ENCODE measurements at regions of chr6 and their contacts with region 1.

Region 1: GRCh38 chr6:2196079-2196679 is 49.2 kb downstream of the GMDS start:
- DNase-seq: peak; percentile 88
- H3K4me3 ChIP-seq: no peak overlapping the region
- H3K27ac ChIP-seq: no peak overlapping the region
- H3K4me1 ChIP-seq: peaks cover 11% of the 10 kb centered on the region
- H3K27me3 ChIP-seq: no peaks in the 10 kb centered on the region
- CTCF ChIP-seq: peak; percentile 50 to 53
- POLR2A ChIP-seq: no peak

Region 2: GRCh38 chr6:408599-409102 is 1787.5 kb before region 1 on chr6:
- CTCF ChIA-PET with region 1: no interaction called
- POLR2A ChIA-PET with region 1: no interaction called
- dilution Hi-C with region 1: no loop called
- intact Hi-C with region 1: no loop called
- DNase-seq: peak; percentile 26
- H3K4me3 ChIP-seq: no peak overlapping the region
- H3K27ac ChIP-seq: no peak overlapping the region
- H3K4me1 ChIP-seq: no peaks in the 10 kb centered on the region
- H3K27me3 ChIP-seq: peaks cover 3 to 4% of the 10 kb centered on the region in 2 experiments
- CTCF ChIP-seq: peak in 1 of 2 donors; percentile 1
- POLR2A ChIP-seq: no peak

Region 3: DNA sequence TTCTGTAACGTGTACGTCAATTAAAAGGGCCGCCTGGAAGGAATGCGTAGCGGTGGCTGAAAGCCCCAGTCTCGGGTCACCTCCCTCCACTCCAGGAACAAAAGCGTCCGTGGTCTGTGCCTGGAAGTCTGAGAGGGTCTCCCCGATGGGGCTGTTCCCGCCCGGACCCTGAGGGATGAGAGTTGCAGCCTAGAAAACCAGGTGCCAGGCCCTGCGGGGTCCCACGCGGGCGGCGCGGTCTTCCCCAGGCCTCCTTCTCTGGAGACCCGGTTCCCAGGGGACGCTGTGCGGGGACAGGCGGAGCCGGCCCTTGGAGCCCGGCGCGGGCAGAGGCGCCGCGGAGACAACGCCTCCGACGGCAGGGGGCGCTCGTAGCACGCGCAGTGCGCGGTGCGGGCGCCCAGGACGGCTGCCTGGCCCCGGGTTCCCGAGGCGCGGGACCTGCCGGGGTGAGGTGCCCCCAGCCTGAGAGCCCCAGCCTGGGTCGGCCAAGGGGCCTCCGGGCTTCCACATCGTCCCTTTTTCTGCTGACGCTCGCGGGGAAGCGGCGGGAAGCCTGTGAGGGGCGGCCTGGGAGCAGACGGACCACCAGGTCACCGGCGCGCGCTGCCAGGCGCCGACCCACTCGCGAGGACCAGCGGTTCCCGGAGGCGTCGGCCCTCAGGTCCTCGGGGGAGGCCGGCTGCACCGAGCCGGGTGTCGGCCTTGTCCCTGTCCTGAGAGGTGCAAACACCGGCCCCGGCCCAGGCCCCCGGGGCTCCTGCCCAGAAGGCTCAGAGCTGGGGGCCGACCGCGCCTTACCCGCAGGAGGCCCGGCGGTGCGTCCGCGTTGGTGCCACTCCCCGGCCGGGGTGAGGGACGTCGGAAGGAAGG is 591.8 kb before region 1 on chr6:
- CTCF ChIA-PET with region 1: interaction called, 4 read pairs
- POLR2A ChIA-PET with region 1: no interaction called
- dilution Hi-C with region 1: no loop called
- intact Hi-C with region 1: loop called (anchors 1 kb)
- DNase-seq: peak; percentile 63
- H3K4me3 ChIP-seq: peak overlapping the region; percentile 33 to 38 (median 36)
- H3K27ac ChIP-seq: no peak overlapping the region
- H3K4me1 ChIP-seq: peaks cover 3% of the 10 kb centered on the region
- H3K27me3 ChIP-seq: peaks cover 12 to 16% of the 10 kb centered on the region in 2 experiments
- CTCF ChIP-seq: peak; percentile 87 to 91
- POLR2A ChIP-seq: no peak

Region 4: DNA sequence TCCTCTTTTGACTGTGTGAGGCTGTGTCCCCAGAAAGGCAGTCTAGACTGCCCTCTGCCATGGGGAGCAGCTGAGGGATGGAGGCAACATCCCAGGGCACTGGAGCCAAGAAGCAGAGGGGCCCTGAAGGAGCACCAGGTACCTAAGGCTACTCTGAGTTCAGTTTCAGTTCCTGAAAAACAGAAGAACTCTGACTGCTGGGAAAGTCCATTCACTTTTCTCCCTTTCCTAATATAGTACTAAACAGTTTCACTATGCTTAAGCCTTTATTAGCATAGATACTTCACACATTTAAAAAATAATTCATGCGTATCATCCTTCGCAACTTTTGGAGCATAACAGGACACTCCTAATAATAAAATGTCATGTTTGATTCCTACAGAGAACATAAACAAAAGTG is 456.5 kb before region 1 on chr6:
- CTCF ChIA-PET with region 1: no interaction called
- POLR2A ChIA-PET with region 1: no interaction called
- dilution Hi-C with region 1: no loop called
- intact Hi-C with region 1: no loop called
- DNase-seq: no peak
- H3K4me3 ChIP-seq: no peak overlapping the region
- H3K27ac ChIP-seq: no peak overlapping the region
- H3K4me1 ChIP-seq: no peaks in the 10 kb centered on the region
- H3K27me3 ChIP-seq: no peaks in the 10 kb centered on the region
- CTCF ChIP-seq: no peak
- POLR2A ChIP-seq: no peak

Region 5: DNA sequence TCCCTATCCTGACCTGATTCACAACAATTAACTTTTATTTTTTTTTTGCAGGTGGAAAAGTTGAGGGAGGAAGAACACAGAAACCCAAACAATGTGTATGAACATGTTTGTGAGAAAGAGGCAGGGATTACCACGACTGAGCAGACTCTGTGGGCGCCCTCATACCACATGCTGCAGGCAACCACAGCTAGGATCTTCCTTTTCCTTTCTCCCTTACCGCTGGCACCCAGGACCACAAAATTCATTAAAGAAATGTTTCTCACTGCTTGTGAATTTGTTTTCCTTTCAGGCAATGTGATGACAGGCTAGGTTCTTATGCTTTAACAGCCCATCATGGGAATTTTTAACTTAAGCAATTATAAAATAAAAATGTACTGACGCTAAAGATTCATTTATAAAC is 237.9 kb before region 1 on chr6:
- CTCF ChIA-PET with region 1: no interaction called
- POLR2A ChIA-PET with region 1: no interaction called
- dilution Hi-C with region 1: no loop called
- intact Hi-C with region 1: no loop called
- DNase-seq: no peak
- H3K4me3 ChIP-seq: no peak overlapping the region
- H3K27ac ChIP-seq: no peak overlapping the region
- H3K4me1 ChIP-seq: no peaks in the 10 kb centered on the region
- H3K27me3 ChIP-seq: no peaks in the 10 kb centered on the region
- CTCF ChIP-seq: no peak
- POLR2A ChIP-seq: no peak

Region 6: GRCh38 chr6:2111162-2111677 is 85.0 kb before region 1 on chr6:
- CTCF ChIA-PET with region 1: interaction called, 4 read pairs
- POLR2A ChIA-PET with region 1: no interaction called
- dilution Hi-C with region 1: no loop called
- intact Hi-C with region 1: loop called (anchors 1 kb)
- DNase-seq: peak; percentile 97
- H3K4me3 ChIP-seq: peak overlapping the region in 1 of 3 experiments; percentile 51
- H3K27ac ChIP-seq: peak overlapping the region; percentile 76
- H3K4me1 ChIP-seq: peaks cover 40% of the 10 kb centered on the region
- H3K27me3 ChIP-seq: no peaks in the 10 kb centered on the region
- CTCF ChIP-seq: no peak
- POLR2A ChIP-seq: no peak

Region 7: DNA sequence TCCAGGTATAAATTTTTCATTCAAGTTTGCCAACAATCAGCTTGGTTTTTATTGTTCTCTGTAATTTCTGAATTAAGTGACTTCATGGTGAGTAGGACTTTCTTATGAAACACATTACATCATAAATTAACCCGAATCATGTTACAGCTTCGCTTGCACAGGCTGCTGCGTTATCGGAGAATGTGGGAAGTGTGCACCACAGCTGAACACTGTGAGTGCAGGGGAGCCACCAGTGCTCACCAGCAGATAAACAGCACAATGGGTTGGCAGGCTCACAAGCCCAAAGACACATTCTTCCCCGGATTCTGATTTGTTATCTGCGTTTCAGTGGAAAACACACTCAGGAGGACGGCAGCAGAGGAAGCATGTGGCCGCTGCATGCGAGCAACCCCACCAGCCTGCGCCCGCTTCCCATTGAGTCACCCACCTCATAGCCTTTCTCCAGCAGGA is 71.9 kb before region 1 on chr6:
- CTCF ChIA-PET with region 1: interaction called, 3 read pairs
- POLR2A ChIA-PET with region 1: no interaction called
- dilution Hi-C with region 1: no loop called
- intact Hi-C with region 1: loop called (anchors 1 kb)
- DNase-seq: peak; percentile 99
- H3K4me3 ChIP-seq: peak overlapping the region in 1 of 3 experiments; percentile 3
- H3K27ac ChIP-seq: peak overlapping the region; percentile 60
- H3K4me1 ChIP-seq: peaks cover 30% of the 10 kb centered on the region
- H3K27me3 ChIP-seq: no peaks in the 10 kb centered on the region
- CTCF ChIP-seq: no peak
- POLR2A ChIP-seq: peak; percentile 30

Region 8: GRCh38 chr6:2209226-2209809 is 13.1 kb after region 1 on chr6:
- CTCF ChIA-PET with region 1: interaction called, 21 read pairs
- POLR2A ChIA-PET with region 1: no interaction called
- dilution Hi-C with region 1: no loop called
- intact Hi-C with region 1: no loop called
- DNase-seq: peak; percentile 64
- H3K4me3 ChIP-seq: no peak overlapping the region
- H3K27ac ChIP-seq: no peak overlapping the region
- H3K4me1 ChIP-seq: no peaks in the 10 kb centered on the region
- H3K27me3 ChIP-seq: no peaks in the 10 kb centered on the region
- CTCF ChIP-seq: peak; percentile 42 to 75
- POLR2A ChIP-seq: no peak

Region 9: DNA sequence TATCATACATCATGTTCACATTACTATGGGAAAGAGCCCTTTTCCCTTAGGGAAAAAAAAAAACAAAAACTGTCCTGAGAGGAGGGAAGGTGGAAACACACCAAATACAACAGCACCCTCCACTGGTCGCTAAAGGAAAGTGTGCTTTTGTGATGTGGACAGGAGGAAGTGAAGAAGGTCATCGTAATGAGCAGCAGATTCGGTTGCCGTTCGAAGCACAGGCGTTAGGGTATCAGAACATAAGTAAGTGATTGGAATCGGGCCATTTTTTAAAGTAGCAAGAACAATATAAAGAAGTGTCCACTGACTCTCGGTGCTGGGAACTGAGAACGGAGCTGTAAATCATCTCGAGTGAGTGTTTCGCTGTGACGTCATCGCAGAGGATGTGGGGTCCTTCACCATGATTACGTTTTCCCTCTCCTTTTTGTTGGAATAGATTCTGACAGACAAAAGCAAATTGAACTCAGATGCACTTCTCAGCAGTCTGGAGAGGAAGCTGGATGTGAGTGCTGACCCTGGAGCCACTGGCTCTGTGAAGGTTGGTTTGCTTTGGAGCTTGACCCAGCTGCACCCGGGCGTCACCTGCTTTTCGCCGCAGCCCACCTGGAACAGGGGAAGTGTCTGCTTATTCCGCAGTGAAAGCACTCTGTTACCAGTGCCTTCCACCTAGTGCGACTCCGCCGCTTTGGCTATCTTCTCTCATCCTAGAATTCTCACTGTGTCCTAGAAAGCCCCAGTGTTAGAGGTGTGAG is 252.8 kb after region 1 on chr6:
- CTCF ChIA-PET with region 1: interaction called, 5 read pairs
- POLR2A ChIA-PET with region 1: no interaction called
- dilution Hi-C with region 1: no loop called
- intact Hi-C with region 1: loop called (anchors 2 kb)
- DNase-seq: peak; percentile 86
- H3K4me3 ChIP-seq: peak overlapping the region in 2 of 3 experiments; percentile 4 to 64
- H3K27ac ChIP-seq: no peak overlapping the region
- H3K4me1 ChIP-seq: peaks cover 4% of the 10 kb centered on the region
- H3K27me3 ChIP-seq: peaks cover under 1 to 2% of the 10 kb centered on the region in 2 experiments
- CTCF ChIP-seq: peak; percentile 60 to 69
- POLR2A ChIP-seq: no peak